SK-N-SH (cell line): ENCODE measurements at regions of chr21 and their contacts with region 1.

Region 1: GRCh38 chr21:36060159-36060921 is at the start of gene SETD4:
- DNase-seq: peak; percentile 95
- H3K4me3 ChIP-seq: peak within 1 kb of the TSS; percentile 82 to 83
- H3K27ac ChIP-seq: peak within 1 kb of the TSS; percentile 89 to 98
- H3K4me1 ChIP-seq: peaks cover 0 to 6% of the 10 kb centered on the region in 2 experiments; a peak in 3 of 4 replicates
- H3K27me3 ChIP-seq: no peaks in the 10 kb centered on the region
- CTCF ChIP-seq: no peak
- EP300 ChIP-seq: no peak
- RAD21 ChIP-seq: no peak
- polyA plus RNA-seq, gene SETD4: 15.9 and 20.7 TPM in 2 replicates

Region 2: GRCh38 chr21:36035381-36035791 is 25.0 kb before region 1 on chr21:
- CTCF ChIA-PET with region 1: interaction called, 12 read pairs
- POLR2A ChIA-PET with region 1: interaction called, 23 read pairs
- DNase-seq: peak; percentile 90
- H3K4me3 ChIP-seq: no peak overlapping the region
- H3K27ac ChIP-seq: peak overlapping the region in 1 of 2 experiments; percentile 94; a peak in 2 of 4 replicates
- H3K4me1 ChIP-seq: peaks cover 0 to 25% of the 10 kb centered on the region in 2 experiments; a peak in 2 of 4 replicates
- H3K27me3 ChIP-seq: no peaks in the 10 kb centered on the region
- CTCF ChIP-seq: 0 out of 2 replicates have a peak, but pooled peaks have one; percentile 9
- EP300 ChIP-seq: peak in 1 of 2 experiments; percentile 92; a peak in 2 of 4 replicates
- RAD21 ChIP-seq: peak; percentile 44

Region 3: GRCh38 chr21:36478207-36478701 is 417.9 kb after region 1 on chr21:
- CTCF ChIA-PET with region 1: no interaction called
- POLR2A ChIA-PET with region 1: no interaction called
- DNase-seq: no peak
- H3K4me3 ChIP-seq: peak overlapping the region in 1 of 2 experiments; percentile 41; a peak in 3 of 4 replicates
- H3K27ac ChIP-seq: peak overlapping the region in 1 of 2 experiments; percentile 87; a peak in 2 of 4 replicates
- H3K4me1 ChIP-seq: peaks cover 0 to 16% of the 10 kb centered on the region in 2 experiments; a peak in 2 of 4 replicates
- H3K27me3 ChIP-seq: no peaks in the 10 kb centered on the region
- CTCF ChIP-seq: no peak
- EP300 ChIP-seq: peak in 1 of 2 experiments; percentile 87; a peak in 2 of 4 replicates
- RAD21 ChIP-seq: no peak